A673 (cell line): ENCODE measurements at regions of chr6 and their contacts with region 1.

Region 1: DNA sequence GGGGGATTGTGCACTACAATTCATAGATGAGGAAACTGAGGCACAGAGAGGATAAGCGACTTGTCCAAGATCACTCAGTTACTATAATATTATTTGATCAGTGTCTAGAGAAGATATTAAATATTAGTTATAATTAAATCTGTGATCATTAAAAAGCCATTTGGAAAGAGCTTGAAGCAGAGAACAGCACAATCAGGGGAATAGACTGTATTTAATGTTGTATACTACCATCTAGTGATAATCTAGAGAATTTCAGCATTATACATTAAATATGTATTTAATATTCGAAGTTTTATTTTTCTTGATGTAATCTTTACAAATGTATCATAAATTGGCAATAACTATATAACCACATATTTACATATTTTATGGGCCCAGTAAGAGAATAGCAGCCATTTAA is 20.1 kb upstream of the MTCL3 start:
- DNase-seq: peak; percentile 42
- H3K4me3 ChIP-seq: no peak overlapping the region
- H3K27ac ChIP-seq: no peak overlapping the region
- H3K4me1 ChIP-seq: no peaks in the 10 kb centered on the region
- H3K27me3 ChIP-seq: no peaks in the 10 kb centered on the region
- CTCF ChIP-seq: peak; percentile 61

Region 2: GRCh38 chr6:127190552-127190951 is 348.7 kb before region 1 on chr6:
- CTCF ChIA-PET with region 1: interaction called, 11 read pairs
- POLR2A ChIA-PET with region 1: no interaction called
- intact Hi-C with region 1: loop called (anchors 10 kb)
- DNase-seq: peak; percentile 54
- H3K4me3 ChIP-seq: no peak overlapping the region
- H3K27ac ChIP-seq: no peak overlapping the region
- H3K4me1 ChIP-seq: no peaks in the 10 kb centered on the region
- H3K27me3 ChIP-seq: no peaks in the 10 kb centered on the region
- CTCF ChIP-seq: peak; percentile 80

Region 3: DNA sequence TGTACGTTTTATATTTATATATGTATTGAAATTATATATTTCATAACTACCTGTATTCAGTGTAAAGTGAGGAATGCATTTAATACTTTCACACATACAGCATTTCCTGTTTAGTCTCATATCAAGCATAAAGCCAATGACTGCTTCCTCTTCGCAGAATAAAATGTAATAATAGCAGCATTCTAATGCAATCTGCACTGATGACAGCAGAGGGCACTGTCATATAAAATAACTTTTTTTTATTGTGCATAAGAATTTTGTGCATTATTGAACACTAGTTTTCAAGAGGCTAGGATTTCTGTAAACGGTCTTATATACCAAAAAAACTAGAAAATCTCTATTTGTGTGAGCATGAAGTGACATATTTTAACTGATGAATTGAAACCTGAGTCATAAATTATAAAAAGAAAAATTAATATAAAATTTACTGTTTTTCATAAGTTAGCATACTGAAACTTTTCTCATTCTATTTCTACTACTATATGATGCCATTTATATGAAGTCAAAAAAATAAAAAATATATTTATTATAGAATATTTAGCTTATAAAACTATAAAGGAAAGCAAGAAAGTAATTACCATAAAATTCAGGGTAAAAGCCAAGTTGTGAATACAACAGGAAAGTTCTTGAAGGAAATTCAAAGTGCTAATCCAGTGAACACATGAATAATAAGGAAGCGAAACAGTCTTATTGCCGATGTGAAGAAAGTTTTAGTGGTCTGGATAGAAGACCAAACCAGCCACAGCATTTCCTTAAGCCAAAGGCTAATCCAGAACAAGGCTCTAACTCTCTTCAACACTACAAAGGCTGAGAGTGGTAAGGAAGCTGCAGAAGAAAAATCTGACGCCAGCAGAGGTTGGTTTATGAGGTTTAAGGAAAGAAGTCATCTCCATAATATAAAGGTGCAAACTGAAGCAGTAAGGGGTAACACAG is 236.3 kb before region 1 on chr6:
- CTCF ChIA-PET with region 1: no interaction called
- POLR2A ChIA-PET with region 1: no interaction called
- intact Hi-C with region 1: loop called (anchors 5 kb)
- DNase-seq: peak; percentile 79
- H3K4me3 ChIP-seq: no peak overlapping the region
- H3K27ac ChIP-seq: peak overlapping the region; percentile 48
- H3K4me1 ChIP-seq: peaks cover 39% of the 10 kb centered on the region
- H3K27me3 ChIP-seq: no peaks in the 10 kb centered on the region
- CTCF ChIP-seq: peak; percentile 82

Region 4: DNA sequence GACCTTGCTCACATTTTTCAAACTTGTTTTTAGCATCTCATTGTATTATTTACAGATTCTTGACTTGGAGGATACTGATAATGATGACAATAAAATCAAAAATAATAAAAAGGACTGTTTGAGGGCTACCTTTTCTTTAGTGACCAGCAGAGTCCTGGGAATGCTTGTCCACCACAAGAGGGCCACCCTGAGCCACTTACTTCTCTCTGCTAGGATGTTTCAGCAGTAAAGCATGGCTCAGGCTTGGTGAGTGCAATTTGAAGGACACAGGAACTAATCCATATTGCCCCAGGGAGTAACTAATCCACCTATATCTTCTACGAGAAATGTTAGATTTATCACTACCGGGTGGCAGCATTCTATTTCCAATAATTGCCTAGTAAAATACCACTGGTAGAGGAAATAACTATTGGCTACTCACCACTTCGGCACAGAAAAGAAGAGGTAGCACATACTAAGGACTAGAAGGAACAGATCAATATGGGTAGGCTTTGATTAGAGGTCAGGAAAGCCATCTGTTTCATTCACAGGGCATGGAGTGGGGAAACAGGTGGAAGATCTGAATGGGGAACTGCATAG is 74.3 kb before region 1 on chr6:
- CTCF ChIA-PET with region 1: interaction called, 7 read pairs
- POLR2A ChIA-PET with region 1: no interaction called
- intact Hi-C with region 1: loop called (anchors 2 kb)
- DNase-seq: peak; percentile 74
- H3K4me3 ChIP-seq: no peak overlapping the region
- H3K27ac ChIP-seq: no peak overlapping the region
- H3K4me1 ChIP-seq: no peaks in the 10 kb centered on the region
- H3K27me3 ChIP-seq: no peaks in the 10 kb centered on the region
- CTCF ChIP-seq: peak; percentile 90

Region 5: GRCh38 chr6:127496471-127496870 is 42.8 kb before region 1 on chr6:
- CTCF ChIA-PET with region 1: no interaction called
- POLR2A ChIA-PET with region 1: no interaction called
- intact Hi-C with region 1: no loop called
- DNase-seq: no peak
- H3K4me3 ChIP-seq: no peak overlapping the region
- H3K27ac ChIP-seq: no peak overlapping the region
- H3K4me1 ChIP-seq: no peaks in the 10 kb centered on the region
- H3K27me3 ChIP-seq: no peaks in the 10 kb centered on the region
- CTCF ChIP-seq: no peak; the same call in 1 of the 2 replicates

Region 6: GRCh38 chr6:127641905-127642304 is 102.6 kb after region 1 on chr6:
- CTCF ChIA-PET with region 1: no interaction called
- POLR2A ChIA-PET with region 1: no interaction called
- intact Hi-C with region 1: no loop called
- DNase-seq: peak; percentile 62
- H3K4me3 ChIP-seq: no peak overlapping the region
- H3K27ac ChIP-seq: no peak overlapping the region
- H3K4me1 ChIP-seq: no peaks in the 10 kb centered on the region
- H3K27me3 ChIP-seq: no peaks in the 10 kb centered on the region
- CTCF ChIP-seq: peak; percentile 78